ENCODE measurements at regions of chr6 and their contacts with region 1.

Region 1: DNA sequence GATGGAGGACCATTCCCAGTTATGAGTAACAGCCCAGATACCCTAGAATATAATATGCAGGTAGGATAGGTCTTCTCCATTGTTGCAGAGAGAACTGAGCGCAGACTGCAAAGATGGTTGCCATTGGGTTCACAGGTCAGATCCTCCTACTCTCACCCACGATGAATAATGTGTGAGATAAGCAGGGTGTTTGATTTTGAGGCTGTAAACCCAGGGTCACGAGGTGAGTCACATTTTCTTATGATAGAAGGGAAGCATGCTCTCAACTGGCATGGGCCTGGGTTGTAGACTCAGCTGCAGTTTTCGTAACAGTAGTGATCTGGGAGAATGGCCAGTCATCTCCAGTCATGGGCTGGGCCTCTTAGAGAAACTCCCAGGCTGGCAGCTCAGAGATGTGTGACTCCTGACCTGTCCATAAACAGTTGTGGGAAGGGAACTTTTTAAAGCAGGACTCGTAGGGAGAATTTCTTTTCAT is 74.2 kb downstream of the CD164 start:
- DNase-seq: no peak
- H3K4me3 ChIP-seq: no peak overlapping the region
- H3K27ac ChIP-seq: peak overlapping the region in 1 of 4 donors; percentile 26
- H3K4me1 ChIP-seq: peaks cover 0 to 16% (median 4%) of the 10 kb centered on the region in 4 donors
- H3K27me3 ChIP-seq: no peaks in the 10 kb centered on the region
- CTCF ChIP-seq: no peak
- EP300 ChIP-seq: no peak
- POLR2A ChIP-seq: no peak

Region 2: DNA sequence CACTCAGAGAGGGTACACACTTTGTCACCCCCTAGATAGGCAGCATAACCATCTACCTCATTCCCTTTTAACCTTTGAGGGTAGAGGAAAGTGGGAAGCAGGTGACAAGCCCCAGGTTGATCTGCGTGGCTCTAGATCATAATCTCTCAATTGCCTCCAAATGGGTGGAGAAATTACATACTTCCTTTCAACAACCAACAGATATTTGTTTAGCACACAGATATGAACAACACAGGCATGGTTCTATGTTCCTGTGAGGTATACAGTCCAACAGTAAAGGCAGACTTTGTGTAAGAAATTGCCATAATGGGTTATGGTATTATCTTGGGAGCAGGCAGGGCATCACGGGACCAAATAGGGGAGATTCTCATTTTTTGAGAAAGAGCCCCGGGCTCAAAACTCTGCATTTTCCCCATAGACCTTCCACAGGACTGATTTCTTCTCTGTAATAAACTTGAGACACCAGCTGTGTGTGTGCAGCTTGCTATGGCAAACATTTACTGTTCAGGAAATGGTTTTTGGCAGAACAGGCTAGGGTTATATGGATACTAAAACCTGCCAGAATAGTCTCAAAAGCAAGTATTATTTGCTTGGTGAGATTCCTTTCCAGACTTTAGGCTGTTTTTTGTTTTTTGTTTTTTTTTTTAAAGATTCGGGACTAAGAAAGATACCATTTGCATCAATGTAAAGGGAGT is 52.0 kb before region 1 on chr6:
- intact Hi-C with region 1: loop called (anchors 10 kb)
- DNase-seq: no peak
- H3K4me3 ChIP-seq: no peak overlapping the region
- H3K27ac ChIP-seq: no peak overlapping the region
- H3K4me1 ChIP-seq: peaks cover 0 to 38% (median 19%) of the 10 kb centered on the region in 4 donors
- H3K27me3 ChIP-seq: no peaks in the 10 kb centered on the region
- CTCF ChIP-seq: no peak
- EP300 ChIP-seq: no peak
- POLR2A ChIP-seq: no peak

Measured in sigmoid colon (tissue), 7 donors.